Testis (tissue), 5 donors: ENCODE measurements at regions of chr16 and their contacts with region 1.

Region 1: GRCh38 chr16:20383106-20384029 is 21.2 kb downstream of the PDILT start:
- DNase-seq: peak; percentile 84
- H3K4me3 ChIP-seq: no peak overlapping the region
- H3K27ac ChIP-seq: no peak overlapping the region
- H3K4me1 ChIP-seq: peaks cover 6% of the 10 kb centered on the region
- H3K27me3 ChIP-seq: no peaks in the 10 kb centered on the region
- CTCF ChIP-seq: peak; percentile 57 to 83 (median 76)
- POLR2A ChIP-seq: no peak

Region 2: GRCh38 chr16:19907161-19907992 is 476.0 kb before region 1 on chr16:
- intact Hi-C with region 1: loop called (anchors 10 kb)
- DNase-seq: peak; percentile 79
- H3K4me3 ChIP-seq: peak overlapping the region in 1 of 2 donors; percentile 20
- H3K27ac ChIP-seq: no peak overlapping the region
- H3K4me1 ChIP-seq: no peaks in the 10 kb centered on the region
- H3K27me3 ChIP-seq: no peaks in the 10 kb centered on the region
- CTCF ChIP-seq: peak; percentile 80 to 88 (median 86)
- POLR2A ChIP-seq: no peak

Region 3: GRCh38 chr16:20568404-20568803 is 185.0 kb after region 1 on chr16:
- intact Hi-C with region 1: no loop called
- DNase-seq: no peak
- H3K4me3 ChIP-seq: no peak overlapping the region
- H3K27ac ChIP-seq: no peak overlapping the region
- H3K4me1 ChIP-seq: no peaks in the 10 kb centered on the region
- H3K27me3 ChIP-seq: no peaks in the 10 kb centered on the region
- CTCF ChIP-seq: no peak
- POLR2A ChIP-seq: no peak